ENCODE measurements at regions of chr2 and their contacts with region 1.

Region 1: DNA sequence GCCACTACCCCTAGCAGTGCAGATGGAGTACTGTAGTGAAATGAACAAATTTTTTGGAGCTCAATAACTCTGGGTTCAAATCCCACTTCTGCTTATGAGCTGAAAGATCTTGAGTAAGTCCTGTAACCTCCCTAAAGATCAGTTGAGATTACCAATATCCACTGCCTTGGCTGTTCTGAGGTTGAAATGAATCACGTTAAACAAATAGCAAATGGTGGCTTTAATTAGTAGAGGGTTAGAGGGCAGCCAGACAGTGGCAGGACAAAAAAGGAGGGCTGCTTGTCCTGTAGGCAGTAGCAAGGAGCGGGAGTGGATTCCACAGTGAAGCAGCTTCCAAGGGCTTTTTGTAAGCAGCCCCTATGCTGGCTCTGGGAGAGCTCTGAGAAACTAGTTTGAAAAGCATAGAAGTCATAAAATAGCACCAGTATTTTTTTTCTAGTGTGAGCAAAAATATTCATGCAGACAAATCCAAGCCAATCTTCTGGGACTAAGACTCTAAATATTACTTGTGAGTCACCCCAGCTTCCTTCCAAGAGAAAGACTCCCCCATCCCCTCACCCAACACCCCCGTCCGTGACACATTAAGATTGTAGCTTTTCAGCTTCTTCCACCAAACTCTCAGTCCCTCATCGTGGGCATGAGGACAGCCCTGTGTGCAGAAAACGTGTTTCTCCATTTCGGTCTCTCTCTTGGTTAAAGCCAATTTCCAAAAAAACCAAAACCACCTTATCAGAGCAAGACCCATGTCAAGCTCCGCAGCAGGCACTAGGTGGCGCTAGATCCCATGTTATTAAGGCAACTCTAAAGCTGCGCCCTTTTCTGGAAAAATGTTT is 123.5 kb upstream of the LGALSL start:
- DNase-seq: peak; percentile 70 to 71
- H3K4me3 ChIP-seq: peak overlapping the region in 1 of 2 donors; percentile 19
- H3K27ac ChIP-seq: peak overlapping the region; percentile 75
- H3K4me1 ChIP-seq: peaks cover 37% of the 10 kb centered on the region
- H3K27me3 ChIP-seq: no peaks in the 10 kb centered on the region
- CTCF ChIP-seq: peak; percentile 89 to 93 (median 92)
- POLR2A ChIP-seq: no peak

Region 2: DNA sequence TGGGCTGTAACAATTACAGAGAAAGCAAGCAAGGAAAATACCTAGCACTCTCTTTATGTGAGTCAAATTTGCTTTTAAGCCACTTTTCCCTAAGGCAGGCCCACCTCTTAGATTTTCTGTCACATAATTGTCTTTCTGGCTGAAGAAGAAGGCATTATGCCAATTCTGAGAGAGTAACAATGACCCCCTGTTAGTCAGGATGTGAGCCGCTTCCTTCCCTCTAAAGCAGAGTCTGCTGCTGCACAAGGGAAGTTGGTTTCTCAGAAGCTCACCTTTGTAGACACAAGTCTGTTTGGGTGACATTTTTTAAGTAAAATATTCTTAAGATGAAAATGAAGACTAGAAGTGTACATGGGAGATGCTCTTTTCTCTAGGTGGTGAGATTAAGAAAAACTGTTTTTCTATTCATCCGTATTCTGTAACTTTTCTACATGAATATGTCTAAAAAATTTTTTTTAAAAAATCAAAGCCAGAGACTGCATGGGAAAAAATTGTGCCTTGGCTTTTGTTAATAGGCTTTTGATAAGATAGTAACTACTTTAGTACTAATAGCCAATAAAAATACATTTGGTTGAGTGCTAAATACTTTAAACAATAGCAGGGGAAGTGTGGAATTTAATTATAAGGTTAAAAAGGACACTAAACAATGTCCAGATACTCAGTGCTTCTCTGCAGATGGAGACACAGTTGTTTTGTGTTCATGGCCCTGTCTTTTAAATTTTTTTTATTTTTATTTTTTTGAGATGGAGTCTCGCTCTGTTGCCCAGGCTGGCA is 277.8 kb before region 1 on chr2:
- intact Hi-C with region 1: loop called (anchors 5 kb)
- DNase-seq: no peak
- H3K4me3 ChIP-seq: no peak overlapping the region
- H3K27ac ChIP-seq: no peak overlapping the region
- H3K4me1 ChIP-seq: peaks cover 8% of the 10 kb centered on the region
- H3K27me3 ChIP-seq: no peaks in the 10 kb centered on the region
- CTCF ChIP-seq: no peak
- POLR2A ChIP-seq: no peak

Region 3: DNA sequence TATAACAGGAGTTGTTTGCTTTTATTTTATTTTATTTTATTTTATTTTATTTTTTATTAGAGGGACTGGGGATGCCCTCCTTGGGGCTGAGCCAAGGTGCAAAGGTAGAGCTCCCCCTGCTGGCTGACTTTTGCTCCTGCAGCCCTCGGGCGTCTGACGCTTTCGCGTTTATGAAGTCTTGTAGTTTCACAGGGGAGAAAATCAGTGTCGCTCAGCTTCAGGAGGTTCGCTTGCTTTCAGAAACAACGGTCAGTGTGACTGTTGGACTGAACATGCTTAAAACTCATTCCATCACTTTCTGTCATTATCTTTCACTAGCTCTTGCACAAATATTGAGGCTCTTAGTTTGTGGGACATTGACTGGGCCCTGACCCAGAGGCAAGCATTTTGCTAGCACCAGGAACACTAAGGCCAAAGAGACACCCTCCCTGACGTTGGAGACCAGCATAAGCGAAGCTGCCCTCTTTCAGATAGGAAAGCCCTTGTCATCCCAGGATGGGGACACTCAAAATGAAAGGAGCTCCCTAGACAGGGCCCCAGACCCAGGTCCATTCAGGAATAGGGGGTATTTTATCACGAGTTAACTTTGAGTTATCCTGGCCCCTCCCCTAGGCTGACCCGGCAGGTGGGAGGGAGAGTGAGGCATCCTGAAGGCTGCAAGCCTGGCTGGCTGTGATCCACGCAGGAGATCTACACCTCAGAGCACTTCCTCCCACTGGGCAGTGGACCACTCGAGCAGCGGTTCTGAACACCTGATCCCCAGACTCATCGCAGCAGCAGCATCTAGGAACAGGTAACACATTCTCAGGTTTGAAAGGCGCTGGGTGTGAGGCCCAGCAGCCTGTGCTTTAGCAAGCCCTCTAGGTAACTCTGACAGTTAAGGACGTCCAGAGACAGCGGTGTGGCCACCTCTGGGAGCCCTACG is 157.8 kb after region 1 on chr2:
- intact Hi-C with region 1: loop called (anchors 2 kb)
- DNase-seq: peak in 1 of 2 donors; percentile 81
- H3K4me3 ChIP-seq: no peak overlapping the region
- H3K27ac ChIP-seq: no peak overlapping the region
- H3K4me1 ChIP-seq: peaks cover 13% of the 10 kb centered on the region
- H3K27me3 ChIP-seq: no peaks in the 10 kb centered on the region
- CTCF ChIP-seq: peak; percentile 73 to 95 (median 94)
- POLR2A ChIP-seq: no peak

Region 4: GRCh38 chr2:64873472-64873924 is 543.0 kb after region 1 on chr2:
- intact Hi-C with region 1: loop called (anchors 10 kb)
- DNase-seq: no peak
- H3K4me3 ChIP-seq: peak overlapping the region in 1 of 2 donors; percentile 6
- H3K27ac ChIP-seq: no peak overlapping the region
- H3K4me1 ChIP-seq: peaks cover 22% of the 10 kb centered on the region
- H3K27me3 ChIP-seq: no peaks in the 10 kb centered on the region
- CTCF ChIP-seq: peak; percentile 89 to 95 (median 93)
- POLR2A ChIP-seq: no peak